ENCODE measurements at regions of chr11 and their contacts with region 1.

Region 1: GRCh38 chr11:40569947-40570531 is 889.4 kb downstream of the LRRC4C start:
- DNase-seq: no peak
- ATAC-seq: no peak
- H3K4me3 ChIP-seq: no peak overlapping the region
- H3K27ac ChIP-seq: no peak overlapping the region
- H3K4me1 ChIP-seq: no peaks in the 10 kb centered on the region
- H3K27me3 ChIP-seq: no peaks in the 10 kb centered on the region
- CTCF ChIP-seq: no peak
- POLR2A ChIP-seq: no peak

Region 2: GRCh38 chr11:40467771-40468170 is 102.3 kb before region 1 on chr11:
- intact Hi-C with region 1: no loop called
- DNase-seq: no peak
- ATAC-seq: no peak
- H3K4me3 ChIP-seq: no peak overlapping the region
- H3K27ac ChIP-seq: no peak overlapping the region
- H3K4me1 ChIP-seq: no peaks in the 10 kb centered on the region
- H3K27me3 ChIP-seq: no peaks in the 10 kb centered on the region
- CTCF ChIP-seq: no peak
- POLR2A ChIP-seq: no peak

Region 3: DNA sequence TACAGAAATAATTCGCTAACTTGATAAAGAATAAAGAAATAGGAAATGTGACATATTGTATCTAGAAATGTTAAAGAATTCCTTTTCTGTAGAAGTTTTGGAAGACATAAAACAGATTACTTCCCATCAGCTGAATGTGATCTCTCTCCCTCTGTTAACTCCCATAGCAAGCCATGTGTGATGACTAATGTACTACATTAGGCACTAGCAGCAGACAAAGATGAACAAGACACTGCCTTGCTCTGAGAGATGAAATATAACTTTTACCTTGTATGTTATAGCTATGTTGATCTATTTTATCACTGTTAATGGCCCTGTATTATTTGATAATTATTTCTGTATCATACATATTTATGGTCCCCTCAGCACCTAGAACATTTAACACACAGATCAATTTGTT is 72.2 kb after region 1 on chr11:
- intact Hi-C with region 1: loop called in 1 of 10 experiments (anchors 10 kb)
- DNase-seq: no peak
- ATAC-seq: no peak
- H3K4me3 ChIP-seq: no peak overlapping the region
- H3K27ac ChIP-seq: no peak overlapping the region
- H3K4me1 ChIP-seq: no peaks in the 10 kb centered on the region
- H3K27me3 ChIP-seq: no peaks in the 10 kb centered on the region
- CTCF ChIP-seq: no peak
- POLR2A ChIP-seq: no peak

Region 4: DNA sequence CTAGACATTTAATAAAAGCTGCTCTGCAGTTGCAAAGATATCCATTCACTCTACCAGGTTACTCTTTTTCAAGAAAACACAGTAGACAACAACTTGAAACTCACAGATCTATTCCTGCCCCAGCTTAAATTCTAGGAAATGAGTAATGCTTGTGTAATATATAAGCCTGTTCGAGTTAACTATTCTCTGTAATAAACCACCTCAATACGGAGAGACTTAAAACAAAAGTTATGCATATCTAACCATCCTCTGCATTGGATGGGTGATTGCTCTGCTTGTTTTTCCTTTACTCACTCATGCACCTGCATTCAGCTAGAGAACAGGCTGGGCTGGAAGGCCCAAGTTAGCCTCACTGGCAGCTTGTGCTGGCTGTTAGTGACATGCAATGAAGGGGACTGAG is 876.1 kb after region 1 on chr11:
- intact Hi-C with region 1: loop called in 1 of 10 experiments (anchors 5 kb)
- DNase-seq: no peak
- ATAC-seq: no peak
- H3K4me3 ChIP-seq: no peak overlapping the region
- H3K27ac ChIP-seq: no peak overlapping the region
- H3K4me1 ChIP-seq: no peaks in the 10 kb centered on the region
- H3K27me3 ChIP-seq: no peaks in the 10 kb centered on the region
- CTCF ChIP-seq: no peak
- POLR2A ChIP-seq: no peak